T-cell (primary cell): ENCODE measurements at regions of chr3 and their contacts with region 1.

Region 1: DNA sequence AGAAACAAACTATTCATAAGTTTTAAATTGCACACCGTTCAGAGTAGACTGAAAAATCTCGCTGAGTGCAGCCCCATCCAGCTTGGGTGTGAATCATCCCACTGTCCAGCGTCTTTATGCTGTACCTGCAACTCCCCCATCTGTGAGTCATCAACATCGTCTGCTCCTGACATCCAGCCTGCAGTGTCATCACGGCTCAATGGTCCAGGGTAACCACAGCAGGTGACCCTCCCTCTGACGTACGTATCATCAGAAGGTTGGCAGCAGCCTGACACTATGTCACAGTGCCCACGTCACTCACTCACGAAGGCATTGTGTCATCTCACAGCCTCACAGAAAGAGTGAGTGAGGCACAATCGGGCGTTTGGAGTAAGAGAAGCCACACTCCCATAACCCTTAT is 65.2 kb downstream of the TPRA1 start:
- DNase-seq: no peak
- ATAC-seq: no peak
- H3K4me3 ChIP-seq: no peak overlapping the region
- H3K4me3 Mint-ChIP-seq: no peak overlapping the region
- H3K27ac ChIP-seq: no peak overlapping the region
- H3K27ac Mint-ChIP-seq: no peak overlapping the region
- H3K4me1 ChIP-seq: no peaks in the 10 kb centered on the region
- H3K4me1 Mint-ChIP-seq: no peaks in the 10 kb centered on the region
- H3K27me3 ChIP-seq: peaks cover 2 to 28% of the 10 kb centered on the region in 2 experiments
- H3K27me3 Mint-ChIP-seq: peaks cover 20 to 27% of the 10 kb centered on the region in 2 donors

Region 2: DNA sequence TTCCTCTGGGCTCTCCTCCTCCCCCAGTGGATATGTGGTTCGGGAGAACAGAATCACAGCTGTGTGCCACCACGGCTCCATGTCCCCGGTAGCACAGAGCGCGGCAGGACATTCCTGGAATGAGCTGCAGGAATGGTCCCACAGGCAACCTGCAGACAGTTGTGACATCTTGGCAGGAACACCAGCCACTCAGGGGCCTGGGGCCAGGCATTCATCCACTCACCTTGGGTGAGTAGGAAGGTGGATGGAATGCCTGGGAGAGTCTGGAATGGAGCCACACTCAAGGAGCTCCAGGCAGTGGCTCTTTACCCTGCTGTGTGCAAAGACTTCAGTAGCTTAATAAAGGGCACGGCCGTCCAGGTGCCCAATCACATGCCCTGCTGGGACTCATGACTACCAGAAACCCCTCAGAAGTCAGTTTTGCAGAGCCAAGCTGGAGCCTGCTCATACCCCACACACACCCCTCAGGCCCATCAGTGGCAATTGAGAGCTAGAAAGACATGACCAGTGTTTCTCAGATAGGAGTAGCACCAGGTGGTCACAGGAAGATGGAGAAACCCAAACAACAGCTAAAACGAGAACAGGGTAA is 120.3 kb before region 1 on chr3:
- CTCF ChIA-PET with region 1: no interaction called
- POLR2A ChIA-PET with region 1: no interaction called
- DNase-seq: no peak
- ATAC-seq: no peak
- H3K4me3 ChIP-seq: no peak overlapping the region
- H3K4me3 Mint-ChIP-seq: no peak overlapping the region
- H3K27ac ChIP-seq: no peak overlapping the region
- H3K27ac Mint-ChIP-seq: no peak overlapping the region
- H3K4me1 ChIP-seq: no peaks in the 10 kb centered on the region
- H3K4me1 Mint-ChIP-seq: no peaks in the 10 kb centered on the region
- H3K27me3 ChIP-seq: peaks cover 0 to 42% of the 10 kb centered on the region in 2 experiments
- H3K27me3 Mint-ChIP-seq: peaks cover 18 to 19% of the 10 kb centered on the region in 2 donors

Region 3: DNA sequence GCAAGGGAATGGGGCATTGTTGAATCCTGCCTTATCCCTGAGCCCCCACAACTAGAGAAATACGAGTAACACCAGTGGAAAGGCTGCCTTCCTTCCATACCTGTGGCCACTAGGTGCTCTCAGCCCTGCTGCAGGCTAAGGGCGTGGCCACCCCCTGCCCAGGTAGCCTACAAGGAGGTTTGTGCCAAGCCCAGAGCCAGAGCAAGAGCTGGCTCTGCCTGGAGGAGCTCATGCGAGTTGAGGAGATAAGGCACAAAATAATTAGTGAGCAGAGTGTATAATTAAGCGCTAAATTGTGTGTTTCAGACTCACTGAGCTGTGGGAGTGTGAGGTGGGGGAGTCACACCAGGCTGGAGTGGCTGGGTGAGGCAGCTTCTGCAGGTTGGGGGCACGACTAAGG is 15.9 kb after region 1 on chr3:
- CTCF ChIA-PET with region 1: interaction called in 1 of 2 experiments, 15 read pairs
- POLR2A ChIA-PET with region 1: no interaction called
- DNase-seq: no peak
- ATAC-seq: no peak
- H3K4me3 ChIP-seq: no peak overlapping the region
- H3K4me3 Mint-ChIP-seq: no peak overlapping the region
- H3K27ac ChIP-seq: no peak overlapping the region
- H3K27ac Mint-ChIP-seq: no peak overlapping the region
- H3K4me1 ChIP-seq: peaks cover 2 to 5% of the 10 kb centered on the region in 2 experiments
- H3K4me1 Mint-ChIP-seq: peaks cover 2 to 5% (median 2%) of the 10 kb centered on the region in 3 donors
- H3K27me3 ChIP-seq: peaks cover 0 to 26% of the 10 kb centered on the region in 2 experiments
- H3K27me3 Mint-ChIP-seq: peaks cover 4 to 13% of the 10 kb centered on the region in 2 donors

Region 4: DNA sequence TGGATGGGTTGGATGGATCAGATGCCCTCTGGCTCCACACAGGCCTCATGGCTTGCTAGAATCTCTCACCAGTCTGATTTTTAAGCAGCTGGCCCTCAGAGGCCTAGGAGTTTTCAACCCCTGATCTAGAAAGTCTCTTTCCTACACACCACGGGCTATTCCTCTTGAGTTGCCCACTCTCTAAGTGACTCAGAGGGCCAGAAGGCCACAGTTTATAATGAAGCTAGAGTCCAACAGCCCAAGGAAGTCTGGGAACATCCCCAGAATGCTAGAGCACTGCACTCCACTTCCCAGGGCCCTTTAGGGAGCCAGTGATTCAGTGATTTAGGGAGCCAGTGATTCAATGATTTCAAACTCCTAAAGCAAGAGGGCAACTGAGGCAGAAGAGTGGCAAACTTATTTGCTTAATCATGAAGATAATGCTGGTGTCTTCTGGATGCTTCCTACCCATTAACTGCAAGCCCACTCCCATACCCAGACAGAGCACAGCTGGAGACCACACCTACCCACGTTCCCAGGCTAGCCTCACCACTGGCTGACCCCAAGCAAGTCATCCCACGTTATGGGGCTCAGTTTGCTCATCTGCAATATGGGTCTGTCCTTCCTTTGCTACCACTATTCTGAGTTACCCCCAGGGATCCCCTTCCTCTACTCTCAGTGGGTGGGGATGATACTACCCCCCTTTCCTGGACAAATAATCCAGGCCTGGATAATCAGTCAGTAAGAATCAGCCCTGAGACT is 184.1 kb after region 1 on chr3:
- CTCF ChIA-PET with region 1: interaction called in 1 of 2 experiments, 10 read pairs
- POLR2A ChIA-PET with region 1: no interaction called
- DNase-seq: no peak
- ATAC-seq: no peak
- H3K4me3 ChIP-seq: no peak overlapping the region
- H3K4me3 Mint-ChIP-seq: no peak overlapping the region
- H3K27ac ChIP-seq: no peak overlapping the region
- H3K27ac Mint-ChIP-seq: no peak overlapping the region
- H3K4me1 ChIP-seq: no peaks in the 10 kb centered on the region
- H3K4me1 Mint-ChIP-seq: no peaks in the 10 kb centered on the region
- H3K27me3 ChIP-seq: peaks cover 0 to 6% of the 10 kb centered on the region in 2 experiments
- H3K27me3 Mint-ChIP-seq: no peaks in the 10 kb centered on the region